ENCODE measurements at regions of chr17 and their contacts with region 1.

Region 1: GRCh38 chr17:30482555-30482954 is 5.3 kb downstream of the GOSR1 start:
- DNase-seq: no peak
- H3K27ac ChIP-seq: no peak overlapping the region
- CTCF ChIP-seq: no peak

Region 2: DNA sequence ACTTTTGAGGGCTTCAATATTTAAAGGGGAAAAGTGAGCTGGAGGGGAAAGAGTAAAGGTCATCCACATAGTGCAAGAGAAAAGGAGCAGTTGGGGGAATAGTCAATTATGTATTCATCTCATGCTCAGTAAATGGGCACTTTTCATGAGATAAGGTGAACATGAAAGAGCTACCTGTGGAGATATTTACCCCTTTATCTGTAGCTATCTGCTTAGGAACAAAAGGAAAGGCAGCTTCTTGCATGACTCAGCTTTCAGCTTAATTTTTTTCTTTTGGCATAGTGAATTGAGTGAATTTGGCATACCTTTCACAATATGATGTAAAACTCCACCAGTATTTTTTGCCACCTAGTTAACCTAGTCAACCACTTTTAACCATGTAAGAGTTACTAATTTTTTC is 77.4 kb before region 1 on chr17:
- CTCF ChIA-PET with region 1: no interaction called
- POLR2A ChIA-PET with region 1: interaction called, 16 read pairs
- DNase-seq: no peak
- H3K27ac ChIP-seq: no peak overlapping the region
- CTCF ChIP-seq: no peak

Region 3: GRCh38 chr17:30495586-30495985 is 13.0 kb after region 1 on chr17:
- CTCF ChIA-PET with region 1: no interaction called
- POLR2A ChIA-PET with region 1: no interaction called
- DNase-seq: no peak
- H3K27ac ChIP-seq: no peak overlapping the region
- CTCF ChIP-seq: no peak

Measured in RWPE1 (cell line).